ENCODE measurements at regions of chr5 and their contacts with region 1.

Region 1: GRCh38 chr5:170434966-170435605 is 45.9 kb upstream of the KCNMB1 start:
- DNase-seq: no peak
- H3K4me3 ChIP-seq: no peak overlapping the region
- H3K27ac ChIP-seq: no peak overlapping the region
- H3K4me1 ChIP-seq: no peaks in the 10 kb centered on the region
- H3K27me3 ChIP-seq: no peaks in the 10 kb centered on the region
- CTCF ChIP-seq: peak; percentile 86 to 89 (median 88)
- POLR2A ChIP-seq: no peak

Region 2: GRCh38 chr5:170591054-170591453 is 156.0 kb after region 1 on chr5:
- intact Hi-C with region 1: no loop called
- DNase-seq: no peak
- H3K4me3 ChIP-seq: no peak overlapping the region
- H3K27ac ChIP-seq: no peak overlapping the region
- H3K4me1 ChIP-seq: no peaks in the 10 kb centered on the region
- H3K27me3 ChIP-seq: no peaks in the 10 kb centered on the region
- CTCF ChIP-seq: no peak
- POLR2A ChIP-seq: no peak

Region 3: GRCh38 chr5:170625221-170626165 is 190.4 kb after region 1 on chr5:
- intact Hi-C with region 1: loop called (anchors 5 kb)
- DNase-seq: no peak
- H3K4me3 ChIP-seq: no peak overlapping the region
- H3K27ac ChIP-seq: no peak overlapping the region
- H3K4me1 ChIP-seq: no peaks in the 10 kb centered on the region
- H3K27me3 ChIP-seq: no peaks in the 10 kb centered on the region
- CTCF ChIP-seq: no peak
- POLR2A ChIP-seq: no peak

Measured in vagina (tissue), 2 donors.